ENCODE measurements at regions of chr15 and their contacts with region 1.

Region 1: DNA sequence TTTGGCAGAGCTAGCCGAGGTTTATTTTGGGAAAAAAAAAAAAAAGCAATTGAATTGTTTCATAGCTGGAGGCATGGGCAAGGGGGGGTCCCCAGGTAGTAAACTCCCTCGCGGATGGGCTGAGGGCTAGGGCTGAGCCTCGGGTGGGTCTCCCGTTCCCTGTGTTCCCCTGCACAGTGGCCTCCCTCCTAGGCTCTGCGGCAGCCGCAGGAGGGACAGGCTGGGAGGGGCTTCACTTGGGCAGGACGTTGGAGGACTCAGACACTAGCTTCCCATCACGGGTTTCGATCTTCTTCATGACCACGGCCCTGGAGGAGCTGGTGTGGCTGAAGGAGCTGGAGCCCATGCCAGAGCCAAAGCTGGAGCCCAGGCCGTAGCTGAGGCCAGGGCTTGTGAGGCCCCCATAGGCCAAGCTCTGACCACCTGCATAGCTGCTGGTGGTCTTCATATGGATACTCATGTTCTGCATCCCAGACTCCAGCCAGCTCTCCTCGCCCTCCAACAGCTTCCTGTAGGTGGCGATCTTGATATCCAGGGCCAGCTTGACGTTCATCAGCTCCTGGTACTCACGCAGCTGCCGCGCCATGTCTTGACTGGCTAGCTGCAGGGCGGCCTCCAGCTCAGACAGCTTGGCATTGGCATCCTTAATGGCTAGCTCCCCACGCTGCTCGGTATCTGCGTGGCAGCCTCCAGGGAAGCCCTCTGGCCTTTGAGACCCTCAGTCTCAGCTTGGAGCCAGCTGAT is 64.0 kb upstream of the CDAN1 start:
- DNase-seq: peak in 2 of 9 experiments; percentile 7 to 13
- ATAC-seq: no peak
- H3K4me3 ChIP-seq: no peak overlapping the region
- H3K4me3 Mint-ChIP-seq: no peak overlapping the region
- H3K27ac ChIP-seq: no peak overlapping the region
- H3K27ac Mint-ChIP-seq: no peak overlapping the region
- H3K4me1 ChIP-seq: no peaks in the 10 kb centered on the region
- H3K4me1 Mint-ChIP-seq: peaks cover 11% of the 10 kb centered on the region
- H3K27me3 ChIP-seq: no peaks in the 10 kb centered on the region
- H3K27me3 Mint-ChIP-seq: no peaks in the 10 kb centered on the region
- CTCF ChIP-seq: no peak

Region 2: DNA sequence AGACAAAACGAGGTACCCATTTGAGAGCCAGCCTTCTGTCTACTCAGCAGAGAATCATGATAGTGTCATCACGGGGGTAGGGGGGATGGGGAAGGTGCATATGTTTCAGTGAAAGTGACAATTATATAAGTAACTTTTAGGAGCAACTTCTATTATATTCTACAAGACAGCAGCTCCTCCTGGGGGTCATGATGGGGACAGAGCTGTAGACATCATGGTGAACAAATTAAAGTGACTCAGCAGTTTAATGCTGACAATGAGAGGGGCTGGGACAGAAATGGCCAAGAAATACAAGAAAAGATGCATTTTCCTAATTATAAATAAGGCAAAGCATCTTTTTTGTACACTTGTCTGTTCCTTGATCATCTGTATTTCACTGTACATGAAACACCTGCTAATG is 429.8 kb before region 1 on chr15:
- CTCF ChIA-PET with region 1: no interaction called
- POLR2A ChIA-PET with region 1: no interaction called
- intact Hi-C with region 1: loop called in 1 of 2 experiments (anchors 5 kb)
- DNase-seq: no peak
- ATAC-seq: no peak
- H3K4me3 ChIP-seq: no peak overlapping the region
- H3K4me3 Mint-ChIP-seq: no peak overlapping the region
- H3K27ac ChIP-seq: no peak overlapping the region
- H3K27ac Mint-ChIP-seq: no peak overlapping the region
- H3K4me1 ChIP-seq: no peaks in the 10 kb centered on the region
- H3K4me1 Mint-ChIP-seq: no peaks in the 10 kb centered on the region
- H3K27me3 ChIP-seq: no peaks in the 10 kb centered on the region
- H3K27me3 Mint-ChIP-seq: no peaks in the 10 kb centered on the region
- CTCF ChIP-seq: no peak